ENCODE measurements at regions of chr3 and their contacts with region 1.

Region 1: DNA sequence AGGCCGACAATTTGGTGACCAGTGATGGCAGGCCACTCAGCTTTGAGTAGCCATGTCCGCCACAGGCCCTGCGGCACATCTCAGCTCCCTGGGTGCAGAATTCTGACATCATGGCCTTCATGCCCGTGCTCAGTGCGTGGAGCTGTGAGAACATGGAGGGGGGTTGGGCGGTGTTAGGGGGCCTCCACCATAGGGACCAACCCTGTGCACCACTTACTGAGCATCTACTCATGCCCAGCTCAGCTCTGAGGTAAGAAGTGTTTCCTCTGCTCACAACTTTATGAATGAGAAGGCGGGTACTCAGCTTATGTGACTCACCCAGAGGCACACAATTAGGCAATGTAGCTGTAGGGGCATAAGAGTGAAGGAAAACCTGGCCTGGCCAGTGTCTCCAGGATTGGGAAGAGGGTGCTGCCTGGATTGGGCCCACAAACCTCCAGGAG is 10.5 kb downstream of the ACOX2 start:
- DNase-seq: peak; percentile 97
- H3K4me3 Mint-ChIP-seq: peak overlapping the region; percentile 8
- H3K27ac Mint-ChIP-seq: peak overlapping the region; percentile 84
- H3K4me1 Mint-ChIP-seq: peaks cover 29% of the 10 kb centered on the region
- H3K27me3 Mint-ChIP-seq: no peaks in the 10 kb centered on the region
- CTCF ChIP-seq: no peak

Region 2: DNA sequence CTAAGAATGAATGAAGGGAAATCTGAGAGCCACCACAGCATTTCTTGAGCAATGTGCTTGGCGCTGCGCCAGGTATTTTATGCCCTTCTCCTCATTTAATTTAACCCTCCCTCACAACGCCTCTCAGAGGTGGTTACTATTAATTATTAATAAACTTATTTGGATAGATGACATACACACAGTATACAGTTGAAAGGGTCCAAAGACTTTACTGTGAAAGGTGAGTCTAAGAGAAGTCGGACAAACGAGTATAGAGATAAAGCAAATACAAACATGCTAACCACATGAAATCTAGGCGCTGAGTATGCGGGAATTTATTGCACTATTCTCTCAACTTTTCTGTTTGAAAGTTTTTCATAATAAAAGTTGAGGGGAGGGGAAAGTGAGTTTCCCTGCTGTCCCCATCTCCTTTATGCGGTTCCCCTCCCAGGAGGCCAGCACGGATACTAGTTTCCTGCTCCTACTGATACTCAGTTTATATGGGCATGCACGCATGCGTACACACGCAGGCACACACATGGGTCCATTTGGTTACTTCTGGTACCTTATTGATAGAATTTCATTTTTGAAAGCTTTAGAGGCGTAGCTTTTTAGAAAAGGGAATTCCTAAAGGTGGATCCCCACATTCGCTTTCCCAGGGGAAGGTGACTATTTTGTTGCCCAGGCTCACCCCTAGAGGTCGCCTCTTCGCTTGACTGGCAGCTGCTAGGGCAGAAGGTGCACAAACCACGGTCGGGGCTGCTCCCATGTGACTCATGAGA is 63.2 kb before region 1 on chr3:
- CTCF ChIA-PET with region 1: interaction called, 9 read pairs
- POLR2A ChIA-PET with region 1: interaction called, 8 read pairs
- intact Hi-C with region 1: loop called (anchors 1 kb)
- DNase-seq: peak; percentile 95
- H3K4me3 Mint-ChIP-seq: no peak overlapping the region
- H3K27ac Mint-ChIP-seq: peak overlapping the region; percentile 71
- H3K4me1 Mint-ChIP-seq: peaks cover 20% of the 10 kb centered on the region
- H3K27me3 Mint-ChIP-seq: no peaks in the 10 kb centered on the region
- CTCF ChIP-seq: peak; percentile 89

Region 3: DNA sequence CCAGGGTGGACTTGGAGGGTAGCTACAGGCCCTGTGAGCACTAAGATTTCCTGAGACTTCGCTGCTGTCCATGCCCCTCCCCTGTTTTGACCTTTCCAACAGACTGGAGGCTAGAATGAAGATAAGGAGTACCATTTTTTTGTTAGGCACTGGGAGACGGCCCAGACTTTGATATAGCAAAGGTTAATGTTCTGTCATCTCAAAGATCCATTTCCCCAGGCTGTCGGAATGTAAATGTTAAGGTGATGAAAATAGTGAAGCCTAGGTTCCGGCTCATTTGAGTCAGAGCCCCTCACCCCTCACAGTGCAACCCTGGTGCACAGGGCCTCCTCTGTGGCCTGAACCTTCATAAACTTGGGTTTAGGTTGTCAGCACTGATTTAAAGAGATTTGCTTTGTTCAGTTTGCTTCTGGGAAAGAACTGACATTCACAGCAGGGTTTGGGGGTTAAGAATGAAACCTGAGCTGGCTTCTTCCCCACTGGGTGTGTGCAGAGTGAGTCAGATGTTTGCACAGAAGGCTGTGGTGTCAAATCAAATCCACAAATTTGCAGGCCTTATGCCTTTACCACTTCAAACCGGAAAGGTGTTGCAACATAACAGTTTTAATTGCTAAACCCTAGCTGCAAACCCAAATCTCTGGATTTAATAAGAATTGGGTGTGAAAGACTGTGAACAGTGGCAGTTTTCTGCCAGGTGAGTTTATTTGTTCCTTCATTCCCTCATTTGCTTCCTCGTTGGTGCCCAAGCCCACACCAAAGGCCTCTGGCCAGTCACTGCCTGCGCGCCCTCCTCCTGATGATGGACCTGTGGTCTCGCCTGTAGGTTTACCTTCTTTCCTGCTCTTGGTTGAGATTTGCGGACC is 55.3 kb before region 1 on chr3:
- CTCF ChIA-PET with region 1: interaction called, 20 read pairs
- POLR2A ChIA-PET with region 1: interaction called, 18 read pairs
- intact Hi-C with region 1: no loop called
- DNase-seq: peak; percentile 98
- H3K4me3 Mint-ChIP-seq: peak overlapping the region; percentile 30
- H3K27ac Mint-ChIP-seq: peak overlapping the region; percentile 82
- H3K4me1 Mint-ChIP-seq: peaks cover 13% of the 10 kb centered on the region
- H3K27me3 Mint-ChIP-seq: no peaks in the 10 kb centered on the region
- CTCF ChIP-seq: no peak